ENCODE measurements at regions of chr6 and their contacts with region 1.

Region 1: DNA sequence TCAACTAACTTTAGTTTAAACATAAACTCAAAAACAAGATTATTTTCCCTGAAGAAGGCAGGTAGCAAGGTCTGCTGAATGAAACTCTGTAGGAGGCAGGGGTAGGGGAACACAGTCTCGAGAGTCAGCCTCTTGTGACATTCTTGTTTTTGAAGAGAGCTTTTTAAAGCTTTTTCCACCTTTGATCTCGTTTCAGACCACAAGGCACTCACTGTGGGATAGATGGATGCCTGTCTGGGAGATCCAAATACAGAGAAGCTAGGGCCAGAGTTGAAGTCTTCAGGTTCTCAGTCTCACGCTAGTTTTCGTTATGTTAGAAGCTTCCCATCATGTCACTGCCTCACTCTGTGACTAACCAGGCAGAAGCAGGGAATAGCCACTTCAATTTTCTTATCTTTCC is 14.9 kb downstream of the F13A1 start:
- DNase-seq: no peak
- H3K4me3 ChIP-seq: no peak overlapping the region
- H3K27ac ChIP-seq: no peak overlapping the region
- H3K4me1 ChIP-seq: no peaks in the 10 kb centered on the region
- H3K27me3 ChIP-seq: no peaks in the 10 kb centered on the region
- CTCF ChIP-seq: no peak

Region 2: DNA sequence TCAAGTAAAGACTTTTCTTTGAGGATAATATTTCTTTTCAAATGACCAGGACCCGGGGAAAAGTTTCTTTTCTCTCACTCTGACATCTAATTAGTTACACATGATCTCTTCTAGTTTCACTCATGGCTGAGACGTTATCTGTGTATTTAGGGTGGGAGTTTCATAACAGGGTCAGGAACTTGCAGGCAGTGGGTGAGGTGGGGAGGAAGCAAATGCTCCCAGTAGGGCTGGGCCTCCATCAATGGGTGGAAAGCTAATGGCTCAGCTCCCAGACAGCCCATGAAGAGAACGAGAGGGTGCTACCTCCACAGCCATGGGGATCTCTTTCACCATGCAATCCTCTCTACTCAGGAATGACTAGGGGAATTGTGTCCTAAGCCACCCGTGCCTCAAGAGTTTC is 104.4 kb before region 1 on chr6:
- CTCF ChIA-PET with region 1: no interaction called
- POLR2A ChIA-PET with region 1: no interaction called
- intact Hi-C with region 1: no loop called
- DNase-seq: no peak
- H3K4me3 ChIP-seq: no peak overlapping the region
- H3K27ac ChIP-seq: no peak overlapping the region
- H3K4me1 ChIP-seq: no peaks in the 10 kb centered on the region
- H3K27me3 ChIP-seq: peaks cover 4% of the 10 kb centered on the region; the same call in 1 of the 2 replicates
- CTCF ChIP-seq: no peak

Region 3: DNA sequence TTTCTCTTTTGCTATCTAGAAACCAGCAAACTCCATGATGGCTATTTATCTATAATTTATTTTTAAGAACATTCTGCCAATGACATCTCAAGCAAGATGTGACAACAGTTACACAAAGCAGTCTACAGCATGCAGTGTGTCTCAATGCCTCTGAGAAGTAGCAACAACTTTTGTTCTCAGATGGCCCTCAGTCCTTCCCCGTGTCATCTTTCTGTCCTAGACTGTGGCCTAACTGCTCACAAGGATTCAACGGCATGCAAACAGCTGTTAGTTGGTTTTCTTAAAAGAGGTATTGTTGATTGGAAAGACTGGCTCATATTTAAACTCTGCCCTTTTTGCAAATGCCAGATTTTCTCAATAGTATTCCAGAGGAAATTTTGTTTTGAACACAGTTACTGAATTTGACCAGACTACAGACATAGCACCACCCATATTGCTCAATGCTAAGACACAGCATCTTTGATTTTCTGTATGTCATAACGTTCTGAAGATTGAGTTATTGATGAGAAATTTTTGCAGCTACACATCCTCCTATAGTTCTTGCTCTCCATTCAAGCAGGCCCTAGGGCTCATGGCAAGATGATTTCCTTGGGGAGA is 41.0 kb after region 1 on chr6:
- CTCF ChIA-PET with region 1: interaction called, 12 read pairs
- POLR2A ChIA-PET with region 1: no interaction called
- intact Hi-C with region 1: no loop called
- DNase-seq: no peak
- H3K4me3 ChIP-seq: no peak overlapping the region
- H3K27ac ChIP-seq: no peak overlapping the region
- H3K4me1 ChIP-seq: no peaks in the 10 kb centered on the region
- H3K27me3 ChIP-seq: no peaks in the 10 kb centered on the region
- CTCF ChIP-seq: no peak

Measured in PC-9 (cell line).